ENCODE measurements at regions of chr2 and their contacts with region 1.

Region 1: DNA sequence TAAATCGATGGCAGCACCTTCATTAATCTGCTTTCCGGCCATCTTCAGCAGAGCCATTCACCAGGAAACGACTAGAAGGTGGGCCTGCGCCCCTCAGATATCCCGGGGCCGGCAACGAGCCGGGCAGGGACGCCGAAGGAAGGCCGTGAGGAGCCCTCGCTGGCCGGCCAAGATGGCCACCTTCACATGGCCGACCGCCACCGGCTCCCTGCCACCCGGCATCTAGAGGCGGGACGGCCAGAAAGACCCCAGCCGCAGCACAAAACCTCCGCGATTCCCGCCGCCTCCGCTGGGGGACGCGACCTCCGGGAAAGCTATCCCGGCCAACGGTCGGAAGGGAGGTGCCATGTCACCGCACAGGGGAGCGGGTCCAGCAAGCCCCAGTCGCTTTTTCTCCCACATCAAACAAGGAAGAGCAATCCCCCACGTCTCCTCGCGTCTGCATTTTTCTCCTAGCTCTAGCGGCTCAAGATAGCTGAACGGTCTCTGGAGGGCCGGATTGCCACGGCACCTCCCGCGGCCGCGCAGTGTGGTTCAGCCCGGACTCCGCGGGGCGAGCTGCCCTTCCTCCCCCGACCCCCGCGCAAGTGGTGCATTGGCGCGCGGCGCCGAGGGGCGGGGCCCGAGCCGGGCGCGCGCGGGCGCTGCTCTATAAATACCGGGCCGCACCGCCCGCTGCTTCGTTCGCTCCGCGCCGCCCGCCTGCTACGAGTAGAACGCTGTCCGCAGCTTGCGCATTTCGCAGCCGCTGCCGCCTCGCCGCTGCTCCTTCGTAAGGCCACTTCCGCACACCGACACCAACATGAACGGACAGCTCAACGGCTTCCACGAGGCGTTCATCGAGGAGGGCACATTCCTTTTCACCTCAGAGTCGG is at the start of gene MAT2A:
- DNase-seq: peak; percentile 90
- H3K4me3 Mint-ChIP-seq: peak within 1 kb of the TSS; percentile 98
- H3K27ac Mint-ChIP-seq: peak within 1 kb of the TSS; percentile 96
- H3K4me1 Mint-ChIP-seq: peaks cover 52% of the 10 kb centered on the region
- H3K27me3 Mint-ChIP-seq: no peaks in the 10 kb centered on the region
- CTCF ChIP-seq: peak; percentile 25
- total RNA-seq, gene MAT2A: 348 and 366 TPM in 2 replicates

Region 2: GRCh38 chr2:85409845-85410583 is 128.7 kb before region 1 on chr2 and contains the start of gene CAPG:
- CTCF ChIA-PET with region 1: interaction called, 13 read pairs
- POLR2A ChIA-PET with region 1: interaction called, 34 read pairs
- intact Hi-C with region 1: no loop called
- DNase-seq: peak; percentile 73
- H3K4me3 Mint-ChIP-seq: peak within 1 kb of the TSS; percentile 70
- H3K27ac Mint-ChIP-seq: peak within 1 kb of the TSS; percentile 83
- H3K4me1 Mint-ChIP-seq: peaks cover 34% of the 10 kb centered on the region
- H3K27me3 Mint-ChIP-seq: no peaks in the 10 kb centered on the region
- CTCF ChIP-seq: no peak
- total RNA-seq, gene CAPG: 173 and 188 TPM in 2 replicates

Region 3: GRCh38 chr2:85457877-85458316 is 80.8 kb before region 1 on chr2:
- CTCF ChIA-PET with region 1: no interaction called
- POLR2A ChIA-PET with region 1: interaction called, 32 read pairs
- intact Hi-C with region 1: no loop called
- DNase-seq: peak; percentile 96
- H3K4me3 Mint-ChIP-seq: no peak overlapping the region
- H3K27ac Mint-ChIP-seq: peak overlapping the region; percentile 40
- H3K4me1 Mint-ChIP-seq: peaks cover 17% of the 10 kb centered on the region
- H3K27me3 Mint-ChIP-seq: no peaks in the 10 kb centered on the region
- CTCF ChIP-seq: no peak

Region 4: GRCh38 chr2:85524336-85524933 is 14.3 kb before region 1 on chr2:
- CTCF ChIA-PET with region 1: interaction called, 5 read pairs
- POLR2A ChIA-PET with region 1: interaction called, 17 read pairs
- intact Hi-C with region 1: no loop called
- DNase-seq: no peak
- H3K4me3 Mint-ChIP-seq: no peak overlapping the region
- H3K27ac Mint-ChIP-seq: no peak overlapping the region
- H3K4me1 Mint-ChIP-seq: no peaks in the 10 kb centered on the region
- H3K27me3 Mint-ChIP-seq: no peaks in the 10 kb centered on the region
- CTCF ChIP-seq: no peak

Region 5: GRCh38 chr2:85577386-85578242 is 38.9 kb after region 1 on chr2 and contains the start of gene VAMP8:
- CTCF ChIA-PET with region 1: no interaction called
- POLR2A ChIA-PET with region 1: interaction called, 62 read pairs
- intact Hi-C with region 1: no loop called
- DNase-seq: peak; percentile 80
- H3K4me3 Mint-ChIP-seq: peak within 1 kb of the TSS; percentile 79
- H3K27ac Mint-ChIP-seq: peak within 1 kb of the TSS; percentile 94
- H3K4me1 Mint-ChIP-seq: peaks cover 11% of the 10 kb centered on the region
- H3K27me3 Mint-ChIP-seq: no peaks in the 10 kb centered on the region
- CTCF ChIP-seq: no peak
- total RNA-seq, gene VAMP8: 49.9 and 56.0 TPM in 2 replicates

Region 6: DNA sequence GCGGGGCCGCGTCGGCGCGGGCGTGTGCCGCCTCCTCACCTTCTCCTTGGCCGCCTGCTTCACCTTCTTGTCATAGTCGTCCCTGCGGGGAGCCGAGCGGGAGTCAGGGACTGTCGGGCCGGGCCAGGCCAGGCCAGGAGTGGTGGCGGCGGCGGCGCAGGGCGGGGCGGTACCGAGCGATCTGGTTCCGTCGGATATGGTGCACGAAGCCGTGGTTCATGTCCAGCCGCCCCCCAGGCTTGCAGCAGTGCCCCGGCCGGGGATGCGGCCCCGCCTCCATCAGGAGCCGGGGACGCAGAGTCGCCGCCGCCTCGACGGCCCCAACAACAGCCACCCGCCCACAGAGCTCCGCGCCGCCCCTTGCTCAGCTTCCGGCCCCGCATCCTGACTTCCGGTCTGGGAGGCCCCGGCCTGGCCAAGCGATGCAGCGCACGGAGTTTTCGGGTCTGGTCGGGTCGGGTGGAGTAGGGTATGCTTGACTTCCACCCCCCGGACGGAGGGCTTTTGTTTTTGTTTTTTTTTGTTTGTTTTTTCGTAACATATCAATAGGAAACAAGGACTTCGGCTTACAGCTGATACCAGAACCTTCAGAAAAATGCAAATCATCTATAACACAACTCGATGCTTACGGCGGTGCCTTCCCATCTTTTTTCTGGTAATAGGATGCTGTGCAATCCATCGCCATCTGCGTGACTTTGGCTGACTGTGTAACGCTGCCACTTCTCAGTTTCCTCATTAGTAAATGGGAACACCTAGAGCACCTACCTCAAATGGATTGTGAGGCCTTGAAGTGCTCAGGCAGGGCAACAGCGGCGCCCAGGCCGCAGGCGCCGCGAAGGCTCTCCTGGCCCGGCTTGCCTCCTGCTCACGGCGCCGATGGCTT is 73.2 kb after region 1 on chr2 and contains the start of gene C2orf68:
- CTCF ChIA-PET with region 1: no interaction called
- POLR2A ChIA-PET with region 1: interaction called, 19 read pairs
- intact Hi-C with region 1: no loop called
- DNase-seq: peak; percentile 83
- H3K4me3 Mint-ChIP-seq: peak within 1 kb of the TSS; percentile 83
- H3K27ac Mint-ChIP-seq: peak within 1 kb of the TSS; percentile 68
- H3K4me1 Mint-ChIP-seq: peaks cover 4% of the 10 kb centered on the region
- H3K27me3 Mint-ChIP-seq: no peaks in the 10 kb centered on the region
- CTCF ChIP-seq: no peak
- total RNA-seq, gene C2orf68: 34.3 and 35.5 TPM in 2 replicates

Measured in MCF 10A (cell line).